Activated naive CD4-positive, alpha-beta T cell treated with anti-CD3 and anti-CD28 coated beads for 36 hours (primary cell): ENCODE measurements at regions of chr17 and their contacts with region 1.

Region 1: GRCh38 chr17:45894022-45894784 is at the start of gene MAPT:
- DNase-seq: peak; percentile 80
- H3K4me3 Mint-ChIP-seq: peak within 1 kb of the TSS; percentile 79
- H3K27ac Mint-ChIP-seq: no peak within 1 kb of the TSS
- H3K4me1 Mint-ChIP-seq: peaks cover 22% of the 10 kb centered on the region
- H3K27me3 Mint-ChIP-seq: peaks cover 24% of the 10 kb centered on the region
- total RNA-seq, gene MAPT: 0.57 to 0.86 TPM

Region 2: GRCh38 chr17:45948881-45949624 is 54.9 kb after region 1 on chr17:
- CTCF ChIA-PET with region 1: interaction called, 4 read pairs
- intact Hi-C with region 1: loop called (anchors 2 kb)
- DNase-seq: peak; percentile 73
- H3K4me3 Mint-ChIP-seq: peak overlapping the region; percentile 69
- H3K27ac Mint-ChIP-seq: no peak overlapping the region
- H3K4me1 Mint-ChIP-seq: peaks cover 9% of the 10 kb centered on the region
- H3K27me3 Mint-ChIP-seq: peaks cover 16% of the 10 kb centered on the region